HEK293 (cell line): ENCODE measurements at regions of chr2 and their contacts with region 1.

Region 1: GRCh38 chr2:85538486-85539360 is at the start of gene MAT2A:
- H3K4me3 ChIP-seq: peak within 1 kb of the TSS; percentile 98
- H3K27ac ChIP-seq: peak within 1 kb of the TSS; percentile 99
- H3K4me1 ChIP-seq: 0 out of 2 replicates have a peak, but pooled peaks cover 2% of the 10 kb centered on the region
- CTCF ChIP-seq: peak; percentile 96

Region 2: GRCh38 chr2:85128899-85129298 is 409.8 kb before region 1 on chr2:
- CTCF ChIA-PET with region 1: no interaction called
- POLR2A ChIA-PET with region 1: no interaction called
- H3K4me3 ChIP-seq: no peak overlapping the region
- H3K27ac ChIP-seq: no peak overlapping the region
- H3K4me1 ChIP-seq: peaks cover 3% of the 10 kb centered on the region; the same call in 1 of the 2 replicates
- CTCF ChIP-seq: no peak

Region 3: GRCh38 chr2:85390941-85391669 is 147.6 kb before region 1 on chr2:
- CTCF ChIA-PET with region 1: interaction called, 3 read pairs
- POLR2A ChIA-PET with region 1: interaction called, 11 read pairs
- H3K4me3 ChIP-seq: no peak overlapping the region
- H3K27ac ChIP-seq: no peak overlapping the region
- H3K4me1 ChIP-seq: no peaks in the 10 kb centered on the region
- CTCF ChIP-seq: peak; percentile 66

Region 4: DNA sequence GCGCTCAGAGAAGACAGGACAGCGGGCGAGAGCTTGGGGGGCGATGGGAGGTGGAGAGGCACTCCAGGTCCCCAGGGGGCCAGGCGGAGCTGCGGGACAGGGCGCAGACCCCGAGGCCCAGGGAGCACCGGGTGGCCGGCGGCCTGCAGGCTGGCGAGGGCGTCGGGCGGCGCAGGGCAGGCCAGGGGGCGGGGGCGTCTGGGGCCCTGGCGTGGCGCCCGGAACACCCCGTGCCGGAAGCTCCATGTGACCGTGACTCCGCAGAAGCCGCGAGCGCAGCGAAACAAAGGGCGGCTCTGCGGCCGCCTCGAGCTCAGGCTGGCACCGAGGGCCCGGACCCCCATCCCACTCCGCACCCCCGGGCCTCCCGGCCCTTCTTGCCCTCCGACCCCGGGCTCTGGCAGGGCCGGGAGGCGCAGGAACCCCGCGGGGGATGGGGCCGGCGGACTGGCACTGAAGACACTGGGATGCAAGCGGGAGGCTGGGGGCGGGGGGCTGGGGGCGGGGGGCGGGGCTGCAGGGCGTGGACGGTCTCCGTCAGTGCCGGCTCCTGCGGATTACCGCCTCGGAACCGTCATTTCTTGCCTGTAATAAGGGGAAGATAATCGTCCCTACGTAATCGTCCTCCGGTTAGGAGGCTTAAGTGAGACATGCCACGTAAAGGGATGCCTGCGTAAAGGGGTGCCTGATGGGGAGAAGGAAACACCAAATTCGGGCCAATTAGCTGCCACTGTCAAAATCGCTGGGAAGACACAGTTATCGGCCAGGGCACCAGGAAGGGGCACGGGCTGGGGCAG is 101.0 kb before region 1 on chr2:
- CTCF ChIA-PET with region 1: no interaction called
- POLR2A ChIA-PET with region 1: interaction called, 25 read pairs
- H3K4me3 ChIP-seq: peak overlapping the region; percentile 34
- H3K27ac ChIP-seq: peak overlapping the region; percentile 84
- H3K4me1 ChIP-seq: peaks cover 6% of the 10 kb centered on the region
- CTCF ChIP-seq: no peak

Region 5: DNA sequence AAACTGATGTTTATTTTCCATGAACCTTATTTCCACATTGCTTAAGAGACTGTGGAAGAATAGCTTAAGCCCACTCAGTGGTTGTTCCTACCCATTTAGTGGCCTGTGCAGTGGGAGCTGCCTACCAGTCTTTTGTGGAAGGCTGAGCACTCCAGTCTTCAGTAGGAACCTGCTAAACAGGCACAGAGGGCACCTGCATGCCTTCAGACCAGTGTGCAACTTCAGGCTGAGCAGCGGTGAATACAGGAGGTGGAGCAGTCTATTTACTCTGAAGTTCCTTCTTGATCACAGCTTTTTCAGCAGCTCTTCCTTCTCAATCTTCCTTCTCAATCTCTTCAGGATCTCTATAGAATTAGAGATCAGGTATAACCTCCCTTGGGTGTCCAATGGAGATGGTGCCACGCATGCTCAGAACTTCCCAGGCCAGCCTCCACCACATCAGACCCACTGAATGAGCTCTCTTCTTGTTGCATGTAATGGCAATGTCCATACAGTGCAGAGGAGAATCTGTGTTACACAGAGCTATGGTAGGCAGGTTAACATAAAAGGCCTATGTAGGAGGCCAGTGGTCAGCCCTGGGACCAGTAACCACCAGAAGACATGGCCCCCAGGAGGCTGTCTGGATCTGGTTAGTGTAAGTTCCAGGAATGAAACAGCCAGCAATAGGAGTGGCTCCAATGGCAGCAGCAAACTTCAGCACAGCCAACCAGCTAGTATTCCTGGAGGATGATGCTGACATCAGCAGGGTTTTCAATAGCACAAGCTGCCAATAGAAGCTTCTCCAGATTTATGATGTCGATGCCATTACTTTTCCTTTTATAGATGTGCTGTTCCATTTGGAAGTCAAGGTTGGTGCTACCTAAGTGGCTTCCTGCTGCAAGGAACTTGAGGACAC is 47.6 kb before region 1 on chr2:
- CTCF ChIA-PET with region 1: interaction called, 3 read pairs
- POLR2A ChIA-PET with region 1: interaction called, 10 read pairs
- H3K4me3 ChIP-seq: no peak overlapping the region
- H3K27ac ChIP-seq: no peak overlapping the region
- H3K4me1 ChIP-seq: no peaks in the 10 kb centered on the region
- CTCF ChIP-seq: no peak

Region 6: GRCh38 chr2:85551698-85552678 is 13.3 kb after region 1 on chr2:
- CTCF ChIA-PET with region 1: interaction called, 42 read pairs
- POLR2A ChIA-PET with region 1: interaction called, 106 read pairs
- H3K4me3 ChIP-seq: no peak overlapping the region
- H3K27ac ChIP-seq: no peak overlapping the region
- H3K4me1 ChIP-seq: no peaks in the 10 kb centered on the region
- CTCF ChIP-seq: peak; percentile 69

Region 7: DNA sequence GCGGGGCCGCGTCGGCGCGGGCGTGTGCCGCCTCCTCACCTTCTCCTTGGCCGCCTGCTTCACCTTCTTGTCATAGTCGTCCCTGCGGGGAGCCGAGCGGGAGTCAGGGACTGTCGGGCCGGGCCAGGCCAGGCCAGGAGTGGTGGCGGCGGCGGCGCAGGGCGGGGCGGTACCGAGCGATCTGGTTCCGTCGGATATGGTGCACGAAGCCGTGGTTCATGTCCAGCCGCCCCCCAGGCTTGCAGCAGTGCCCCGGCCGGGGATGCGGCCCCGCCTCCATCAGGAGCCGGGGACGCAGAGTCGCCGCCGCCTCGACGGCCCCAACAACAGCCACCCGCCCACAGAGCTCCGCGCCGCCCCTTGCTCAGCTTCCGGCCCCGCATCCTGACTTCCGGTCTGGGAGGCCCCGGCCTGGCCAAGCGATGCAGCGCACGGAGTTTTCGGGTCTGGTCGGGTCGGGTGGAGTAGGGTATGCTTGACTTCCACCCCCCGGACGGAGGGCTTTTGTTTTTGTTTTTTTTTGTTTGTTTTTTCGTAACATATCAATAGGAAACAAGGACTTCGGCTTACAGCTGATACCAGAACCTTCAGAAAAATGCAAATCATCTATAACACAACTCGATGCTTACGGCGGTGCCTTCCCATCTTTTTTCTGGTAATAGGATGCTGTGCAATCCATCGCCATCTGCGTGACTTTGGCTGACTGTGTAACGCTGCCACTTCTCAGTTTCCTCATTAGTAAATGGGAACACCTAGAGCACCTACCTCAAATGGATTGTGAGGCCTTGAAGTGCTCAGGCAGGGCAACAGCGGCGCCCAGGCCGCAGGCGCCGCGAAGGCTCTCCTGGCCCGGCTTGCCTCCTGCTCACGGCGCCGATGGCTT is 73.2 kb after region 1 on chr2 and contains the start of gene C2orf68:
- CTCF ChIA-PET with region 1: no interaction called
- POLR2A ChIA-PET with region 1: interaction called, 10 read pairs
- H3K4me3 ChIP-seq: peak within 1 kb of the TSS; percentile 79
- H3K27ac ChIP-seq: peak within 1 kb of the TSS; percentile 89
- H3K4me1 ChIP-seq: peaks cover under 1% of the 10 kb centered on the region; the same call in 1 of the 2 replicates
- CTCF ChIP-seq: no peak

Region 8: GRCh38 chr2:85728883-85729824 is 190.4 kb after region 1 on chr2:
- CTCF ChIA-PET with region 1: no interaction called
- POLR2A ChIA-PET with region 1: no interaction called
- H3K4me3 ChIP-seq: no peak overlapping the region
- H3K27ac ChIP-seq: no peak overlapping the region
- H3K4me1 ChIP-seq: peaks cover 2% of the 10 kb centered on the region
- CTCF ChIP-seq: peak; percentile 93